ENCODE measurements at regions of chr1 and their contacts with region 1.

Region 1: DNA sequence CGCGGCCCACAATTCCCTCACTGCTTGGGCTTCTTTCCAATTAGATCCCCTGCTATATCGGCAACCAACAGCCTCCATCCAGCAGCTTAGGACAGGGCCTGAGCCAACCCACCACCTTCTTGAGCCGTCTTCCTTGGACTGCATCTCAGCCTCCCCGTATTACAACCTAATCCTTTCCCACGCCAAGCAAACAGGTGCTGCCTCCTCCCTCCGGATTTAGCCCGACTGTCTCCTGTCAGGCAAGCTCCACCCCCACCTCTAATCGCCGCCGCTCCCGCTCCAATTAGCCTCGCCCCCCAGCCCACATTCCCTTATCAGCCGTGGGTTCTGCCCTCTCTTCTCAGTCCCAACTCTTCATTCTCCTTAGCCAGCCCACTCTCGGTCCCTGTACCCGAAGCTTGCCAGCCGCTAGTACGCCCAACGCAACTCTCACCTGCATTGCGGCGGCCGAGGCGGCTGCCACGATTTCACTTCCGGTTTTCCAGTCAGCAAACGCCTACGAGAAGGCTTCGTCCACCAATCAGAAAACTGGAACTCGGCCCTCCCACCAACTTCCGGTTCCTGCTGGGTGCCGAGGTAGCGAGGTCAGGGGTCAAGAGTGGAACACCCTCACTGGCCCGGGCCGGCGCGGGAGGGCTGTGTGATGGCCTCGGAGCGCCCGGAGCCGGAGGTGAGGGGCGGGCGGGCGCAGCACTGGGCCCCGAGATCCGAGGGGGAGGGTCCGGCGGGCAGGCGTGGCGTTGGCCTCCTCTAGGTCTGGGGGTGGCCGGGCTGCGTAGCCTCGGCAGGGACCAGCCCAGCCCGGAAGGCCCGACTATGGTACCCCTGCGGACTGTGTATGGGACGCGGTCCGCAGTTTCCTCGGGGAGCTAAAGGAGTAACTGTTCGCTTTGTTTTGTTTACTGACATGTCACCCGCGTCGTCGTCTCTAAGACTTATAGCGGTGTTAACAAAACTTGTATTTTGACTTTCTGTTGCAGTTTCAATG is at the starts of genes MED8 and SZT2:
- DNase-seq: peak; percentile 95
- ATAC-seq: peak; percentile 96
- H3K4me3 ChIP-seq: peak within 1 kb of the TSS; percentile 82 to 96 (median 92)
- H3K4me3 Mint-ChIP-seq: peak within 1 kb of the TSS; percentile 100
- H3K27ac ChIP-seq: peak within 1 kb of the TSS; percentile 63 to 87
- H3K27ac Mint-ChIP-seq: peak within 1 kb of the TSS; percentile 98
- H3K4me1 ChIP-seq: peaks cover 20 to 24% of the 10 kb centered on the region in 2 donors
- H3K4me1 Mint-ChIP-seq: peaks cover 41% of the 10 kb centered on the region
- H3K27me3 ChIP-seq: no peaks in the 10 kb centered on the region
- H3K27me3 Mint-ChIP-seq: no peaks in the 10 kb centered on the region
- CTCF ChIP-seq: no peak
- total RNA-seq, gene MED8: 30.0 and 31.8 TPM in 2 replicates
- total RNA-seq, gene SZT2: 193 and 197 TPM in 2 replicates

Region 2: DNA sequence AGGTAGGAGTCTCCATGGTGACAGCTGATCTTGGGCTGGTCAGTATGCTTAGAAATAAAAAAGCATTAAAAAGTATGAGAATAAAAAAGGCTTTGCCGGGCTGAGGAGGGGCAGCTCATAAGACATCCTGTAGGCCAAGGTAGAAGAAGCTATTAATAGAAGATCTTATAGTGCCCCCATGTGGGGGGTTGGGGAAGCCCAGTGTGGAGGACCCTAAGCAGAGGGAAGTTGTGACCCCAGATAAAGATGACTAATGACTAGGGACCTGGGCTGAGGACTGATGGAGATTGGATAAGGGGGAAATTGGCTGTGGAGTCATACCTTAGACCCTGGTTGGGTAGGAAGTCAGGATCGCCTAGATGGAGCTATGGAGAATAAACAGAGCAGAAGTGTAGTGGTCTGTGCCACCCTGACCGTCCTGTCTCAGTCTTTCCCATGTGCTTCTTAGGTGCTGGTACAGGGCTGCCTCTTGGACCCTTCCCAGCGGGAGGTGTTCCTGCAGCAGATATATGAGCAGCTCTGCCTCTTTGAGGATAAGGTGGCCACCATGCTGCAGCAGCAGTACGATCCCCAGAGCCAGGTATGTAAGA is 25.1 kb after region 1 on chr1:
- CTCF ChIA-PET with region 1: interaction called, 17 read pairs
- POLR2A ChIA-PET with region 1: interaction called, 5 read pairs
- intact Hi-C with region 1: no loop called
- DNase-seq: peak; percentile 79
- ATAC-seq: peak; percentile 96
- H3K4me3 ChIP-seq: no peak overlapping the region
- H3K4me3 Mint-ChIP-seq: no peak overlapping the region
- H3K27ac ChIP-seq: no peak overlapping the region
- H3K27ac Mint-ChIP-seq: peak overlapping the region; percentile 34
- H3K4me1 ChIP-seq: no peaks in the 10 kb centered on the region
- H3K4me1 Mint-ChIP-seq: peaks cover 3% of the 10 kb centered on the region
- H3K27me3 ChIP-seq: no peaks in the 10 kb centered on the region
- H3K27me3 Mint-ChIP-seq: no peaks in the 10 kb centered on the region
- CTCF ChIP-seq: peak; percentile 79

Measured in B cell (primary cell).